Mammary epithelial cell (primary cell): ENCODE measurements at regions of chr15 and their contacts with region 1.

Region 1: GRCh38 chr15:83747050-83747717 is 93.3 kb downstream of the ADAMTSL3 start:
- DNase-seq: peak; percentile 65
- H3K4me3 ChIP-seq: peak overlapping the region in 1 of 3 experiments; percentile 18
- H3K27ac ChIP-seq: no peak overlapping the region
- H3K4me1 ChIP-seq: no peaks in the 10 kb centered on the region
- H3K27me3 ChIP-seq: no peaks in the 10 kb centered on the region
- CTCF ChIP-seq: peak; percentile 51 to 68

Region 2: GRCh38 chr15:83436458-83437158 is 310.6 kb before region 1 on chr15:
- CTCF ChIA-PET with region 1: no interaction called
- dilution Hi-C with region 1: no loop called
- in situ Hi-C with region 1: no loop called
- intact Hi-C with region 1: loop called (anchors 2 kb)
- DNase-seq: peak; percentile 61
- H3K4me3 ChIP-seq: no peak overlapping the region
- H3K27ac ChIP-seq: no peak overlapping the region
- H3K4me1 ChIP-seq: no peaks in the 10 kb centered on the region
- H3K27me3 ChIP-seq: no peaks in the 10 kb centered on the region
- CTCF ChIP-seq: peak; percentile 64 to 70

Region 3: GRCh38 chr15:83564975-83565532 is 182.1 kb before region 1 on chr15:
- CTCF ChIA-PET with region 1: no interaction called
- dilution Hi-C with region 1: no loop called
- in situ Hi-C with region 1: loop called in 1 of 2 experiments (anchors 10 kb)
- intact Hi-C with region 1: loop called (anchors 1 kb)
- DNase-seq: no peak
- H3K4me3 ChIP-seq: no peak overlapping the region
- H3K27ac ChIP-seq: no peak overlapping the region
- H3K4me1 ChIP-seq: no peaks in the 10 kb centered on the region
- H3K27me3 ChIP-seq: no peaks in the 10 kb centered on the region
- CTCF ChIP-seq: no peak

Region 4: DNA sequence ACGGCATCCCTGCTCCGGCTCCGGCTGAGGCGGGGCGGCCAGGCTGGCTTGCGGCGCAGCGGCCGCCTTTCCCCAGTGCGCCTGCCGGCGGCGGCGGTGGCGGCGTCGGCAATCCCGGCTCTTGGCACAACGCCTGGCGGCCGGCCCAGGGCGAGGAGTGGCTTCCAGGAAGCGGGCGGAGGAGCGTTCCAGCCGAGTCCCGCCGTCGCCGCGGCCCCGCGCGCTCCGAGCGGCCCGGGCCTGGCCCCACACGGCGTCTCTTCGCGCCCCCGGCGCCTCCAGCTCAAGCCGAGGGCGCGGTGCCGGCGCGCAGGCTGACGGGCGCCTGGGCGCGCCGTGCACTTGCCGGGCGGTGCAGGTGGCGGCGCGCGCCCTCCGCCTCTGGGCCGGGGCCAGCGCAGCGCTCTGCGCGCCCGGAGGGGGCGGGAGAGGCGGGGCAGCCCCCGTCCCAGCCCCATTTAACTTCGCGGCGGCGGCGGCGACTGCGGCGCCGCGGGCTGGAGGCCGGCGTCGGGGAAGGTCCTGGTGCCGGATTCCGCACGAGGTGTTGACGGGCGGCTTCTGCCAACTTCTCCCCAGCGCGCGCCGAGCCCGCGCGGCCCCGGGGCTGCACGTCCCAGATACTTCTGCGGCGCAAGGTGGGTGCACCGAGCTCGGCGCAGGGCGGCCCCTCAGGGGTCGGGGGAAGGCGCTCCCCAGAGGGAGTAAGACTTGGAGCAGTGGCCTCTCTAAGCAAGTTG is 93.4 kb before region 1 on chr15 and contains the start of gene ADAMTSL3:
- CTCF ChIA-PET with region 1: no interaction called
- dilution Hi-C with region 1: no loop called
- in situ Hi-C with region 1: no loop called
- intact Hi-C with region 1: loop called (anchors 5 kb)
- DNase-seq: peak; percentile 48
- H3K4me3 ChIP-seq: peak within 1 kb of the TSS in 2 of 3 experiments; percentile 9 to 10
- H3K27ac ChIP-seq: no peak within 1 kb of the TSS
- H3K4me1 ChIP-seq: peaks cover 7% of the 10 kb centered on the region
- H3K27me3 ChIP-seq: peaks cover 17% of the 10 kb centered on the region
- CTCF ChIP-seq: no peak
- total RNA-seq, gene ADAMTSL3: 0.17 TPM in 1 of 2 donors, not detected in the other

Region 5: DNA sequence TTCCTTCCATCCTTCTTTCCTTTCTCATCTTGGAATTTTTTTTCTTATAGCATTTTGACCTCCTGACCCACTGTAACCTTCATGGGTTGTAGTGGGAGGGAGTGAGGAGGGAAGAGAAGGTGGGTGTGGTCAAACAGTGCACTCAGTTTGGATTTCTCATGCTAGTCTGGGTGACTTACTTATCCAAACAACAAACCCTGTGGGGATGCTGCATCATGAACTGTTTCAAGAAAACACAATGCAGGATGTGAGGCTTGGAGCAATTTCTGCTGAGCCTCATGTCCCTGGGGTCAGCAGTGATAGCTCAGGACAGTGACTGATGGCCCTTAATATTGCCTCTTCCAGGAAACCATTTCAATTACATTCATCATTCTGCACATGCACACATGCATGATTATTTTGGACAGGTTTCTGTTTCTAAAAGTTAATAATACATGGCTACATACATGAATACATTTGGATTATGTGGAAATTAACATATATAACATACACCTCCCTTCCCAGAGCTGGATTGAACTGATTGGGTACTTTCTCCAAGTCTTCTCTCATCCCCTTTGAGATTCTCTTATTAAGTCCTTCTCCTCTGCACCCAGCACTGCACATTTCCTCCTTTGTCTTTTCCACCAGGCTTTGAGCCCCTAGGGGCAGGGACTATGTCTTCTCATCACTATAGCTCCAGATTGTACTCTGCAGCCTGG is 32.1 kb before region 1 on chr15:
- CTCF ChIA-PET with region 1: no interaction called
- dilution Hi-C with region 1: no loop called
- in situ Hi-C with region 1: no loop called
- intact Hi-C with region 1: no loop called
- DNase-seq: no peak
- H3K4me3 ChIP-seq: no peak overlapping the region
- H3K27ac ChIP-seq: no peak overlapping the region
- H3K4me1 ChIP-seq: no peaks in the 10 kb centered on the region
- H3K27me3 ChIP-seq: peaks cover 3% of the 10 kb centered on the region
- CTCF ChIP-seq: no peak

Region 6: GRCh38 chr15:83890587-83890986 is 143.4 kb after region 1 on chr15:
- CTCF ChIA-PET with region 1: no interaction called
- dilution Hi-C with region 1: no loop called
- in situ Hi-C with region 1: no loop called
- intact Hi-C with region 1: no loop called
- DNase-seq: peak; percentile 33
- H3K4me3 ChIP-seq: no peak overlapping the region
- H3K27ac ChIP-seq: no peak overlapping the region
- H3K4me1 ChIP-seq: peaks cover 5% of the 10 kb centered on the region
- H3K27me3 ChIP-seq: peaks cover 2% of the 10 kb centered on the region
- CTCF ChIP-seq: no peak

Region 7: GRCh38 chr15:84035399-84035766 is 288.2 kb after region 1 on chr15:
- CTCF ChIA-PET with region 1: no interaction called
- dilution Hi-C with region 1: no loop called
- in situ Hi-C with region 1: no loop called
- intact Hi-C with region 1: loop called (anchors 5 kb)
- DNase-seq: peak; percentile 46
- H3K4me3 ChIP-seq: no peak overlapping the region
- H3K27ac ChIP-seq: no peak overlapping the region
- H3K4me1 ChIP-seq: no peaks in the 10 kb centered on the region
- H3K27me3 ChIP-seq: no peaks in the 10 kb centered on the region
- CTCF ChIP-seq: peak; percentile 74 to 75